ENCODE measurements at regions of chr3 and their contacts with region 1.

Region 1: DNA sequence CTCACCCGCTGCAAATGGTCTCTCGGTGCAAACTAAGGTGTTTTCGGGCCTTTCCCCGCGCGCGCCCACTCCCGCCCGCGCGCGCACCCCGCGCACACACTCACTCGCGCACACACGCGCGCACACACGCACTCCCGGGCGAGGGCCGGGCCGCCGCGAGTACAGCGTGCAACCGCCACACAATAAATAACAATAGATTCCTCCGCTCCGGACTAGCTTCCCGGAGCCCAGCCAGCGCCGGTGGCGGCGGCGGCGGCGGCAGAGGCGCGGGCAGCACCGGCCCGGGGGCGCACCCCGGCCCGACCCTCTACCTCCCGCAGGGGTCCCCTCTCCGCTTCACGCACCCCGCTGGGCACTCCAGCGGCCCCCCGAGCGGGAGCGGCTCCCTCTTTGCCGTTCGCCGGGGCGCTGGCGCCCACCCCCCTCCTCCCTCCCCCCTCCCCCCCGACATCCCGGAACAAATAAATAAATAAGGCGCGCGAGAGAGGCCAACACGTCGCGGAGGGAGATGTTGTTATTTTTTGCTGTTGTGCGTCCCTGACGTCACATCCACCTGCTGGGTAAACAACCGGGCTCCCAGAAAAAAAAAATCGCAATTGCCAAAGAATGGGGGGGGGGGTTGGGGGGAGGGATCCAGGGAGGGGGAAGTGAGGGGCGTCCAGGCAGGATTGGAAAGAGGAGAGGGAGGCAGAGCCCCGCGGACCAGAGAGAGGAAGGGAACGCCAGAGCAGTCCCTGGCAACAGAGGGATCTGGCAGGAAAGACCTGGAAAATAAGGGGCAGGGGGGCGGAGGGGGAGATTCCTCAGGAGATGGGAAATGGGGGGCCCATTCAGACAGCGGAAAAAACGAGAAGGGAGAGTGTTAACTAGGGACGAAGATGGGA is at the start of gene FOXP1:
- DNase-seq: peak; percentile 75
- H3K4me3 ChIP-seq: peak within 1 kb of the TSS; percentile 79 to 90
- H3K27ac ChIP-seq: peak within 1 kb of the TSS; percentile 98 to 100
- H3K4me1 ChIP-seq: peaks cover 5% of the 10 kb centered on the region
- H3K27me3 ChIP-seq: no peaks in the 10 kb centered on the region
- CTCF ChIP-seq: no peak
- POLR2A ChIP-seq: peak; percentile 60
- total RNA-seq, gene FOXP1: 133 to 156 TPM

Region 2: GRCh38 chr3:70531063-70531657 is 1052.6 kb before region 1 on chr3:
- intact Hi-C with region 1: loop called (anchors 10 kb)
- DNase-seq: no peak
- H3K4me3 ChIP-seq: no peak overlapping the region
- H3K27ac ChIP-seq: no peak overlapping the region
- H3K4me1 ChIP-seq: no peaks in the 10 kb centered on the region
- H3K27me3 ChIP-seq: no peaks in the 10 kb centered on the region
- CTCF ChIP-seq: peak in 3 of 4 experiments; percentile 40 to 67 (median 60)
- POLR2A ChIP-seq: no peak

Region 3: GRCh38 chr3:70716832-70717231 is 867.0 kb before region 1 on chr3:
- intact Hi-C with region 1: loop called (anchors 5 kb)
- DNase-seq: peak; percentile 25
- H3K4me3 ChIP-seq: no peak overlapping the region
- H3K27ac ChIP-seq: no peak overlapping the region
- H3K4me1 ChIP-seq: no peaks in the 10 kb centered on the region
- H3K27me3 ChIP-seq: no peaks in the 10 kb centered on the region
- CTCF ChIP-seq: peak in 3 of 4 experiments; percentile 45 to 70 (median 53)
- POLR2A ChIP-seq: no peak

Region 4: GRCh38 chr3:71006810-71007785 is 576.7 kb before region 1 on chr3:
- intact Hi-C with region 1: loop called (anchors 10 kb)
- DNase-seq: no peak
- H3K4me3 ChIP-seq: no peak overlapping the region
- H3K27ac ChIP-seq: peak overlapping the region; percentile 19 to 64
- H3K4me1 ChIP-seq: peaks cover 15% of the 10 kb centered on the region
- H3K27me3 ChIP-seq: no peaks in the 10 kb centered on the region
- CTCF ChIP-seq: peak; percentile 14 to 60 (median 41)
- POLR2A ChIP-seq: no peak

Region 5: GRCh38 chr3:71064288-71064955 is 519.4 kb before region 1 on chr3:
- intact Hi-C with region 1: loop called (anchors 2 kb)
- DNase-seq: peak; percentile 39
- H3K4me3 ChIP-seq: peak overlapping the region; percentile 58 to 67
- H3K27ac ChIP-seq: peak overlapping the region; percentile 96 to 99
- H3K4me1 ChIP-seq: peaks cover 11% of the 10 kb centered on the region
- H3K27me3 ChIP-seq: no peaks in the 10 kb centered on the region
- CTCF ChIP-seq: peak in 1 of 4 experiments; percentile 42
- POLR2A ChIP-seq: peak; percentile 21

Region 6: DNA sequence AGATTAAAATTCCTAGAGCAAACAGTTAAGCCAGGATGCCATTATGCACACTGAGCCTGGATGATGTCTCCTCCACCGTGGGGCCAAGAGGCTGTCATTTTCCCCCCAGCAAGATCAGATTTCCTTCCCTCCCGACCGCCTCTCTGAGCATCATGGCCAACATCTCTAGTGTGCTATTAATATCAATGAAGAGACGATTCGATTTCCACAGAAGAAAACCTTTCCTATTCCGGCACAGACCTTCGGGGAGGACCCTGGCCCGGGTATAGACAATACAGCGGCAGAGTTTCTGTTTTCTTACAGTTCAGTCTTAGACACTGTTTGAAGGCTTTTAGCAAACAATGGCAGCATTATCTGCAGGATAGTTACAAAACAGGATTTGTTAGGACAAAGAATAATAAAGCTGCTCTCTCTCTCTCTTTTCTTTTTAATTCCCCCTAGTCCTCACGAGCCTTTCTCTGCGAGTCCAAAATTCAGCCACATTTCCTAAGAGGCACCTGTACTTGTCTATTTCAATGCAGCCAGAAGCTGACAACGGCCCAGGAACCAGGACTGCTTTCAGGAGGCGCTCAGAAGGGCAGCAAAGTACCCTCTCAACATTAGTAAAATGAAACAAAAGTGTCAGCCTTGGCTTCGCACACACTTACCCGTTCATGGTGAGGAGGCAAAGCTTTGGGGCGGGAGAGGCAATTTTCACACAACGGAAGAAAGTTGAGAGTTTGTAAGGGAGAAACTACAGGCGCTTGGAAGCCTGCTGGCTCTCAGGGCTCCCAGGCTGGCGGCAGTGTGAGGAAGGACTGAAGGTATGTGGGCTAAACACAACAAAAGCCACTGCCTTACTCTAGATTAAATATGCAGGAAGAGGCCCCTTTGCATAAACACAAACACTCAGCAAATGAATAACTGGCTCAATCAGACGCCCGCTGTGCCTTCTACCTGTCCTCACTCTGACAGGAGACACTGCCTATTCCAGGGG is 278.3 kb before region 1 on chr3:
- intact Hi-C with region 1: loop called (anchors 5 kb)
- DNase-seq: peak; percentile 35
- H3K4me3 ChIP-seq: peak overlapping the region; percentile 15 to 28
- H3K27ac ChIP-seq: peak overlapping the region; percentile 80 to 83
- H3K4me1 ChIP-seq: no peaks in the 10 kb centered on the region
- H3K27me3 ChIP-seq: no peaks in the 10 kb centered on the region
- CTCF ChIP-seq: no peak
- POLR2A ChIP-seq: no peak